ENCODE measurements at regions of chr1 and their contacts with region 1.

Region 1: DNA sequence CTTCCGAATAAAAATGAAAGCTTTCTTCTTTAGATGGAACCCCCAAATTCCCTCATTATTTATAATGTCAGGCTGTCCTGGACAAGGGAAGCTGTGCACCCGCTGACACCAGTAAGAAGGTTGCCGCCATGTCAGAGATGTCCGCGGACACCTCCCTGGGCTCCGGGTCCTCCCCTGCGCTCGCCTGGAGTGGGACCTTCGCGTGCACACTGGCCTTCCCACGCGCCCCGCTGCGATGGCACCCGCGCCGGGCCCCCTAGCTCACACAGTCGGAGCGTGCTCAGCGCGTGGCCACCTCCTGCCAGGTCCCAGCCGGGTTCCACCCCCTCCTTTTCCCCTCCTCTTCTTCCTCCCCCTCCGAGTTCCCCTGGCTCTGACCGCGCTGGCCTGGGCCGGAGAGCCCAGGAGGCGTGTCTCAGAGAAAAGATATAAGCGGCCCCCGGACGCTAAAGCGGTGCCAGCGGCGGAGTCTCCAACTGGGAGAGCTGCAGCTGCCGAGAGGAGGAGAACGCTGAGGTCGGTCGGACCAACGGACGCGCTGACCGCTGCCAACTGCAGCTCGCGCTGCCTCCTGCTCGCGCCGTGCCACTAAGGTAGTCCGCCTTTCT is at the start of gene G0S2:
- DNase-seq: peak; percentile 66
- H3K4me3 Mint-ChIP-seq: peak within 1 kb of the TSS; percentile 76
- H3K27ac Mint-ChIP-seq: peak within 1 kb of the TSS; percentile 68
- H3K4me1 Mint-ChIP-seq: peaks cover 68% of the 10 kb centered on the region
- H3K27me3 Mint-ChIP-seq: peaks cover 22% of the 10 kb centered on the region
- total RNA-seq, gene G0S2: 92.7 to 93.1 TPM

Region 2: GRCh38 chr1:209428241-209428921 is 246.7 kb before region 1 on chr1:
- CTCF ChIA-PET with region 1: no interaction called
- POLR2A ChIA-PET with region 1: no interaction called
- intact Hi-C with region 1: no loop called
- DNase-seq: no peak
- H3K4me3 Mint-ChIP-seq: no peak overlapping the region
- H3K27ac Mint-ChIP-seq: no peak overlapping the region
- H3K4me1 Mint-ChIP-seq: no peaks in the 10 kb centered on the region
- H3K27me3 Mint-ChIP-seq: peaks cover 6% of the 10 kb centered on the region

Region 3: DNA sequence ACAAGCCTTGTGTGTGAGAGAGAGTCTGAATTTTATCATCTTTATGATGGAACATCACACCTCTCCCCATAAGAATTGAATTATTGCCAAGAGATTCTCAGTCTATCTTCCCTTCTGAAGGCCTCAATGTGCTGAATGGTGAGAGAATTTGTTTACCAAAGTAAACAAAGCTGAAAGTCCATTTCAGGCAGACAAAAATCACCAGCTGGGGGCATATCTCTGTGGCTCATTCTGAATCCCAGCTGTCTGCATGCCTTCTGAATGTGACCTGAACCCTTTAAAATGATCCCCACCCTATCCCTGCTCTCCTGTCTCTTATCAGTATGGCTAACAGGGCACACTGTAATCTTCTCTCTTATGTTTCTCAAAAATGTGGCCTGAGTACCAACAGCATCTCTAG is 190.6 kb before region 1 on chr1:
- CTCF ChIA-PET with region 1: no interaction called
- POLR2A ChIA-PET with region 1: no interaction called
- intact Hi-C with region 1: no loop called
- DNase-seq: no peak
- H3K4me3 Mint-ChIP-seq: no peak overlapping the region
- H3K27ac Mint-ChIP-seq: no peak overlapping the region
- H3K4me1 Mint-ChIP-seq: peaks cover 15% of the 10 kb centered on the region
- H3K27me3 Mint-ChIP-seq: no peaks in the 10 kb centered on the region

Region 4: GRCh38 chr1:209651148-209651547 is 23.9 kb before region 1 on chr1:
- CTCF ChIA-PET with region 1: interaction called, 10 read pairs
- POLR2A ChIA-PET with region 1: interaction called, 5 read pairs
- intact Hi-C with region 1: loop called (anchors 1 kb)
- DNase-seq: peak; percentile 90
- H3K4me3 Mint-ChIP-seq: no peak overlapping the region
- H3K27ac Mint-ChIP-seq: peak overlapping the region; percentile 59
- H3K4me1 Mint-ChIP-seq: peaks cover 57% of the 10 kb centered on the region
- H3K27me3 Mint-ChIP-seq: no peaks in the 10 kb centered on the region

Region 5: DNA sequence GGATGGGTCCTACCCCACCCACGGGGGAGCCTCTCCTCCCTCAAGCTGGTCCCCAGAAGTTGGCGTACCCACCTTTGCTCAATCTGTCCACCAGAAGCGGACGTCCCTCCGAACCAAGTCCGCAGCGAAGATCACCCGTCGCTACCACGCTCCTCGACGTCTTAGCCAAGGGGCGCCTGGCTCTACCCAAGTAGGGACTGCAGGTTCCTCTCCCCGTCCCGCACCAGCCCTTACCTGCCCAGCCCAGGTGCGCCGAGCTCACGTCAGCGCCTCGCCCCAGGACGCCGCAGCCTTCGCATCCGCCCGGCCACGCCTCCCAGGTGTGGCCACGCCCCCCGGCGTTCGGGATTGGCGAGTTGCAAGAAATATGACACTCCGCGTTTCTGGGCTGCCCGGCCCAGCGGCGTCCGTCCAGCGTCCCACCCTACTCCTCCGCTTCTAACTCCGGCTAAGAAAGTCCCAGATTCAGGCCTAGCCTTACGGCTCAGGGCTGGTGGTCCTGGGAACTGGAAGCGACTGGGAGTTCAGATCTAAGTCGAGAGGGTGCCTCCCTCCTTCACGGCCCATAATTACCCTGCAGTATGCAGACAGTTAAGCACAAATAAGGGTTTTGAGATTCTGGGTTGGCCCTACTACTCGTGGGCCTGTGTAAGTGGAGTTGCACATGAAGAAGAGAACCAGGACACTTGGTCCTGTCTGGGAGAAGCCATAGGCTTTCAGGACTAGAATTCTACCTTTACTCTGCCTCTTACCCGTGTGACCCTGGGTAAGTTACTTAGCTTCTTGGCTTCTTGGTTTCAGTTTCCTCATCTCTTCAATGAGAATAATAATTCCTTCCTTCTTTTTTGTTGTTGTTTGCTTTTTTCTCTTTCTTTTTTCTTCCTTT is 131.1 kb after region 1 on chr1 and contains the start of gene IRF6:
- CTCF ChIA-PET with region 1: no interaction called
- POLR2A ChIA-PET with region 1: no interaction called
- intact Hi-C with region 1: no loop called
- DNase-seq: peak; percentile 73
- H3K4me3 Mint-ChIP-seq: peak within 1 kb of the TSS; percentile 75
- H3K27ac Mint-ChIP-seq: peak within 1 kb of the TSS; percentile 55
- H3K4me1 Mint-ChIP-seq: peaks cover 9% of the 10 kb centered on the region
- H3K27me3 Mint-ChIP-seq: peaks cover 5% of the 10 kb centered on the region
- total RNA-seq, gene IRF6: 0.07 to 0.31 TPM

Region 6: GRCh38 chr1:210021145-210021860 is 346.2 kb after region 1 on chr1:
- CTCF ChIA-PET with region 1: no interaction called
- POLR2A ChIA-PET with region 1: no interaction called
- intact Hi-C with region 1: no loop called
- DNase-seq: no peak
- H3K4me3 Mint-ChIP-seq: no peak overlapping the region
- H3K27ac Mint-ChIP-seq: no peak overlapping the region
- H3K4me1 Mint-ChIP-seq: no peaks in the 10 kb centered on the region
- H3K27me3 Mint-ChIP-seq: no peaks in the 10 kb centered on the region